ENCODE measurements at regions of chr5 and their contacts with region 1.

Region 1: GRCh38 chr5:143403593-143404415 is at the start of gene NR3C1:
- DNase-seq: peak; percentile 95
- H3K4me3 Mint-ChIP-seq: peak within 1 kb of the TSS; percentile 93
- H3K27ac Mint-ChIP-seq: peak within 1 kb of the TSS; percentile 98
- H3K4me1 Mint-ChIP-seq: peaks cover 44% of the 10 kb centered on the region
- H3K27me3 Mint-ChIP-seq: no peaks in the 10 kb centered on the region
- total RNA-seq, gene NR3C1: 62.2 and 64.7 TPM in 2 replicates

Region 2: GRCh38 chr5:143002459-143003328 is 401.1 kb before region 1 on chr5:
- intact Hi-C with region 1: loop called (anchors 1 kb)
- DNase-seq: peak; percentile 90
- H3K4me3 Mint-ChIP-seq: peak overlapping the region; percentile 76
- H3K27ac Mint-ChIP-seq: peak overlapping the region; percentile 99
- H3K4me1 Mint-ChIP-seq: peaks cover 69% of the 10 kb centered on the region
- H3K27me3 Mint-ChIP-seq: no peaks in the 10 kb centered on the region

Region 3: GRCh38 chr5:143101121-143101520 is 302.7 kb before region 1 on chr5:
- intact Hi-C with region 1: loop called (anchors 2 kb)
- DNase-seq: peak; percentile 76
- H3K4me3 Mint-ChIP-seq: peak overlapping the region; percentile 58
- H3K27ac Mint-ChIP-seq: peak overlapping the region; percentile 92
- H3K4me1 Mint-ChIP-seq: peaks cover 46% of the 10 kb centered on the region
- H3K27me3 Mint-ChIP-seq: no peaks in the 10 kb centered on the region

Region 4: GRCh38 chr5:143314659-143315058 is 89.1 kb before region 1 on chr5:
- intact Hi-C with region 1: loop called (anchors 5 kb)
- DNase-seq: no peak
- H3K4me3 Mint-ChIP-seq: no peak overlapping the region
- H3K27ac Mint-ChIP-seq: peak overlapping the region; percentile 9
- H3K4me1 Mint-ChIP-seq: peaks cover 33% of the 10 kb centered on the region
- H3K27me3 Mint-ChIP-seq: no peaks in the 10 kb centered on the region

Region 5: GRCh38 chr5:143334903-143335302 is 68.9 kb before region 1 on chr5:
- intact Hi-C with region 1: no loop called
- DNase-seq: no peak
- H3K4me3 Mint-ChIP-seq: no peak overlapping the region
- H3K27ac Mint-ChIP-seq: no peak overlapping the region
- H3K4me1 Mint-ChIP-seq: peaks cover 12% of the 10 kb centered on the region
- H3K27me3 Mint-ChIP-seq: no peaks in the 10 kb centered on the region

Region 6: DNA sequence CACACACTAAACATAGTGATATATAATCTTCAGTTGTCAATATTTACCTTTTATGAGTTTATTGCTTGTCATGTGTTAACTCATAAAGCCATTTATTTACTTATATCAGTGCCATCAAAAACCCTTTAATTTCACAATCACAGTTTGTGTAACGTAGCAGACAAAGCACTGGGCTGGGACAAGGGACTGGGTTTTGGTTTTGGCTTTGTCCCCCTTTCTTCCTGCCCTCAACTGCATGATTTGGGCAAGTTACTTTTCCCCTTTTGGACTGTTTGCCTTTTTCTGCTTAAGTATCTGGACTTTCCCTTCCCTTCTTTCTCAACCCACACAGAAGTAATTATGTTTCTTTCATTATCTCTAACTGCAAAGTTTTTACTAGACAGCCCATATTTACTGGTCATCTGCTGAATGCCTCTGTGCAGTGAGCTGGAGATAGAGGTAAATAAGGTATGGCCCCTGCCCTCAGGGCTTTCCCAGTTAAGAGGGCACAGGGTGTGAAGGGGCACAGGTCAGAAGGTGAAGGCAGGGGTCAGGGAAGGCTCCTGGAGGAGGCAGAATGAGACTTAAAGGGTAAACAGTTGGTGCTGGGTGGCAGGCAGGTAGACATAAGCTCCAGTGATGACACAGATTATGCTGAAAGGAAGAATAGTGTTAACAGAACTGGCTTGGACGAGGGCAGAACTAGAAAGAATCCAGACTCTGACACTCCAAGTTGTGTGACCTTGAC is 14.5 kb after region 1 on chr5:
- intact Hi-C with region 1: loop called (anchors 2 kb)
- DNase-seq: no peak
- H3K4me3 Mint-ChIP-seq: peak overlapping the region; percentile 4
- H3K27ac Mint-ChIP-seq: peak overlapping the region; percentile 20
- H3K4me1 Mint-ChIP-seq: peaks cover 14% of the 10 kb centered on the region
- H3K27me3 Mint-ChIP-seq: no peaks in the 10 kb centered on the region

Region 7: DNA sequence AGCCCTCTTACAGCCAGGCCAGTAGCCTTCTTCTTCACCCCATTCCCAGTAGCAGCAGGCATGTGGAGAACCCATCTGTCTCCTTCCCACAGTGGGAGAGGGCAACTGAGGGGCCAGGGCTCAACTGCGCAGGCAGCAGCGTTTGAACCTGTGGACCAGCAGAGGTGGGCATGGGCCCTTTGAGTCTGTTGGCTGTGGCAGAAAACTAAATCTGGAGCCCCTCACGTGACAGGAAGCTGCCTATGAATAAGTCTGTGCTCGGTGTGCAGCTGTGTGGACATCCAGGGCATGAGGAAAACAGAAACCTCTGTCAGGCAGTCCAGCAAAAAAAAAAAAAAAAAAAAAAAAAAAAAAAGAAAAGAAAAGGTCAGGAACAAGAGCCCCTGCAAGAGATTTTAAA is 188.8 kb after region 1 on chr5:
- intact Hi-C with region 1: no loop called
- DNase-seq: peak; percentile 61
- H3K4me3 Mint-ChIP-seq: no peak overlapping the region
- H3K27ac Mint-ChIP-seq: no peak overlapping the region
- H3K4me1 Mint-ChIP-seq: peaks cover 32% of the 10 kb centered on the region
- H3K27me3 Mint-ChIP-seq: no peaks in the 10 kb centered on the region

Region 8: DNA sequence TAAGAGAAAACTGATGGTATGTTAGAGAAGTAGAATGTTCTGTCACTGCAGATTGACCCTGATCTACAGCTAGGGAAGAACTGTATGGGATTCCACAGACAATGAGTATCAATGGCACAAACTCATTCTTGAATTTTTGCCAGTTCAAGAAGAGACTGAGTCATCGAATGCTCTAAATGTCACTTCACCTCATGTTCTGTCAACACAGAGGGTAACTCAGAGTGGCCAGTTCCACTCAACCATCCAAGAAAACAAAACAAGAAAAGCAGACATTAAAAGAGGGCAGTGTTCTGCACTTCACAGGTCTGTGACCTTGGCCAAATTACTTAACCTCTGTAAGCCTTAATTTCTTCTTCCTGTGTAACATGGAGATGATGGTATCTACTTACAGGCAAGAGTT is 276.0 kb after region 1 on chr5:
- intact Hi-C with region 1: loop called (anchors 5 kb)
- DNase-seq: no peak
- H3K4me3 Mint-ChIP-seq: no peak overlapping the region
- H3K27ac Mint-ChIP-seq: peak overlapping the region; percentile 72
- H3K4me1 Mint-ChIP-seq: peaks cover 18% of the 10 kb centered on the region
- H3K27me3 Mint-ChIP-seq: peaks cover 4% of the 10 kb centered on the region

Region 9: DNA sequence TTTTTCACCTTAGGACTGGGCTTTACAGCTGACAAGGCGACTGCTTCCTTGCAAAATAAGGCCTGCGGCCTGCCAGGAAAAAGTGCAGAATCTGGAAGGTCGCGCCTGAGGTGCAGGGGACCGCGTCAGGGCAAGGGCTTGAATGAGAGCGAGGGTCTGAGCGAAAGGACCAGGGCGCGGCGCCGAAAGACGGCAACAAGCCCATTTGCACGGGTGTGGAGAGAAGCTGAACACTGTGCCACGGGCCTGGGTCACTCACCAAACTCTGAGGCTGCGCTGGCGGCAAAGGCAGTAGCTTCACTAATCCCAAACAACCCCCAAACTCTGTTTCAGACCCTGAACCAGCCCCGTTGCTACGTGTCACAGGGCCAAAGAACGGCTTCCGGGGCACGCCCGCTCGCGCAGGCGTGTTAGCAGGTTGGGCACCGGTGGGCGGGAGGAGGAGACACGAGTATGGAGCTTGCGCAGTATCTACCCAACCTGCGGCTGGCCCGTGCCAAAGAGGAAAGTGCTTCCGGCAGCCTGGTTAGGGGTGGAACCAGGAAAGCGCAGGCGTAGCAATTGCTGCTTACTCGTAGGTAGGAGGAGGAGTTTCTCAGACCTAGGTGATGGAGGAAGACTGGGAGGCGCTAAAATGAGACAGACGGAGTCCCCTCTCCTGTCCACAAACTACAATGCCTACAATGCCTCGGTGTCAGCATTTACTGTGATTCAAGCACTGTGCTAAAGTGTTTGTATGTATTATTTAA is 766.6 kb after region 1 on chr5 and contains the starts of genes KCTD16 and YIPF5:
- intact Hi-C with region 1: loop called (anchors 5 kb)
- DNase-seq: peak; percentile 99
- H3K4me3 Mint-ChIP-seq: peak within 1 kb of the TSS; percentile 99
- H3K27ac Mint-ChIP-seq: peak within 1 kb of the TSS; percentile 93
- H3K4me1 Mint-ChIP-seq: peaks cover 37% of the 10 kb centered on the region
- H3K27me3 Mint-ChIP-seq: peaks cover 16% of the 10 kb centered on the region
- total RNA-seq, gene KCTD16: not detected in 2 replicates
- total RNA-seq, gene YIPF5: 32.0 and 34.6 TPM in 2 replicates